AG04450 (cell line): ENCODE measurements at regions of chr9 and their contacts with region 1.

Region 1: GRCh38 chr9:94182532-94182931 is 76.6 kb upstream of the ZNF169 start:
- DNase-seq: no peak
- H3K4me3 ChIP-seq: no peak overlapping the region
- H3K27ac ChIP-seq: no peak overlapping the region
- H3K27me3 ChIP-seq: no peaks in the 10 kb centered on the region
- CTCF ChIP-seq: no peak

Region 2: DNA sequence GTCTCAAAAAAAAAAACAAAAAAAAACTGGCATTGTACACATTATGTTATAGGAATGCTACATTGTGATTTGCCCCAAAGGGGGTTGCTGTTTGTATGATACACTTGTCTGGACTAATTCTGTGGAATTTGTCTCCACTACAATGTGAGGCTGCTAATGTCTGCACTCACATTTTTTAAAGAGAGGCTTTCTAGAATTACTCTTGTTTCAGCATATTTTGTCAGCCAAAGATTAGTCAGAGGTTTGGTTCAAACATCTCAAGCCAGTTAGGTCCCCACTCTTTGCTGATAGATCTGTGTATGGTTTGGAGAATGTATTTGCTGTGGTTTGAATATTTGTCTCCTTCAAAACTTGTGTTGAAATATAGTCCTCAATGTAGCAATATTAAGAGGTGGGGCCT is 17.2 kb after region 1 on chr9:
- CTCF ChIA-PET with region 1: no interaction called
- POLR2A ChIA-PET with region 1: interaction called, 11 read pairs
- DNase-seq: no peak
- H3K4me3 ChIP-seq: no peak overlapping the region
- H3K27ac ChIP-seq: no peak overlapping the region
- H3K27me3 ChIP-seq: no peaks in the 10 kb centered on the region
- CTCF ChIP-seq: no peak